ENCODE measurements at regions of chr16 and their contacts with region 1.

Region 1: DNA sequence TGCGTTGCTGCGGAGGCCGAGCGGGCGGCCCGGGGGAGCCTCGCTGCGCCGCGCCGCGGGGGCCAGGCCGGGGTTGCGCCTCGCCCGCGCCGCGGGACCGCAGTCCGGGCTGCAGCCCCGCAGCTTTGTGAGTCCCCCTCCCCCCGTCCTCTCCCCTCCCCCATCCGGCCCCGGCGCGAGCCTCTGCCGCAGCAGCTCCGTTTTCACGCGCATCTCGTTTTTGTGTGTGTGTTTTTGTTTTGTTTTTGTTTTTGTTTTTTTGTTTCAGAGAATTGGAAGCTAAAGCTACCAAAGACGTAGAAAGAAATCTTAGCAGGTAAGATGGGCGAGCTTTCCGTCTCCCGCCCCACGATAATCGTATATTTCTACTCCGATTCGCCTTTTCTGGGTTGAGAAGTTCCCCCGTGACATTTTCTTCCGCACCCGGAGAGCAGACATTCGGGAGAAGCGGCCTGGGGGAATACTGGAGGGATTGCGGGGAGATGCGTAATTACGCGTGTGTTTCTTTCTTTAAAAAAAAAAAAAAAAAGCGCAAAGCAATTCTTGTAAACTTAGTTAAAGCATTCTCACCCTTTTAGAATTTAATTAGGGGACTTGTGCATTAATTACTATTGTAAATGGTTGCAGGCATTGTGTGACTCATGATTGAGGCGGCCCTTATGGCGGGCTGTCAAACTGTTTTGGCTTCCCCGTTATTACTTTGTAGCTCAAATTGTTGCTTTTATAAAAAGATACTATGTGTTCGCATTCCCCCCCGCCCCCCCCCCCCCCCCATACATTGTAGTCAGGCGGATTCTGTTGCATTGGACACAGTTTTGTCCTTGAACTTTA is 749 bp downstream of the TNRC6A start:
- DNase-seq: peak; percentile 18
- H3K4me3 ChIP-seq: peak overlapping the region; percentile 75 to 89
- H3K27ac ChIP-seq: peak overlapping the region; percentile 90 to 96
- H3K4me1 ChIP-seq: no peaks in the 10 kb centered on the region
- H3K27me3 ChIP-seq: no peaks in the 10 kb centered on the region
- CTCF ChIP-seq: no peak
- POLR2A ChIP-seq: no peak

Region 2: DNA sequence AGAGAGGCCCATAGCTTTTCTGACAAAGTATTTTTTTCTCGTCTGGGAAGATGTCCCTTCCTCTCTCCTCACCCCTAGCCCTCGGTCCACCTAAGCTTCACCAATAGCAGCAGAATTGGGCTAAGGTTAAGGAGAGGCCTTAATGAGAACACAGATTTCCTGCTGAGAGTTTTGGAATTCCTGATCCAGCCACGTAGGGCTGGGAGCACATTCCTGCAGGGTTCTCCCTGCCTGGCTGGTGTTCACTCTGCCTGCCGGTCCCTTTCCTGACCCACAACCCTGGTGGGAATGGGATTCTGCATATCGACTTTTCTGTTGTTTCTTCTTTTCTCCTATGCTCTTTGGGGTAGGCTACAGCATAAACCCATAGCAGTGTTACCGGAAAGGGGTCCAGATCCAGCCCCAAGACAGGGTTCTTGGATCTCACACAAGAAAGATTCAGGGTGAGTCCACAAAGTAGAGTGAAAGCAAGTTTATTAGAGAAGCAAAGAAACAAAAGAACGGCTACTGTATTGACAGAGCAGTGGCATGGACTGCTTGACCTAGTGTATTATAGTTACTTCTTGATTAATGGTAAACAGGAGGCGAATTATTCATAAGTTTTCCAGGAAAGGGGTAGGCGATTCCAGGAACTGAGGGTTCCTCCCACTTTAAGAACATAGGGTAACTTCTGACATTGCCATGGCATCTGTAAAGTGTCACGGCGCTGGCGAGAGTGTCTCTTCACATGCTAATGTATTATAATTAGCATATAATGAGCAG is 381.1 kb before region 1 on chr16:
- intact Hi-C with region 1: no loop called
- DNase-seq: no peak
- H3K4me3 ChIP-seq: no peak overlapping the region
- H3K27ac ChIP-seq: no peak overlapping the region
- H3K4me1 ChIP-seq: no peaks in the 10 kb centered on the region
- H3K27me3 ChIP-seq: no peaks in the 10 kb centered on the region
- CTCF ChIP-seq: no peak
- POLR2A ChIP-seq: no peak

Region 3: GRCh38 chr16:24701521-24701951 is 28.7 kb before region 1 on chr16:
- intact Hi-C with region 1: loop called (anchors 2 kb)
- DNase-seq: no peak
- H3K4me3 ChIP-seq: no peak overlapping the region
- H3K27ac ChIP-seq: peak overlapping the region; percentile 49 to 52
- H3K4me1 ChIP-seq: no peaks in the 10 kb centered on the region
- H3K27me3 ChIP-seq: no peaks in the 10 kb centered on the region
- CTCF ChIP-seq: no peak
- POLR2A ChIP-seq: no peak